SK-N-SH (cell line): ENCODE measurements at regions of chr19 and their contacts with region 1.

Region 1: DNA sequence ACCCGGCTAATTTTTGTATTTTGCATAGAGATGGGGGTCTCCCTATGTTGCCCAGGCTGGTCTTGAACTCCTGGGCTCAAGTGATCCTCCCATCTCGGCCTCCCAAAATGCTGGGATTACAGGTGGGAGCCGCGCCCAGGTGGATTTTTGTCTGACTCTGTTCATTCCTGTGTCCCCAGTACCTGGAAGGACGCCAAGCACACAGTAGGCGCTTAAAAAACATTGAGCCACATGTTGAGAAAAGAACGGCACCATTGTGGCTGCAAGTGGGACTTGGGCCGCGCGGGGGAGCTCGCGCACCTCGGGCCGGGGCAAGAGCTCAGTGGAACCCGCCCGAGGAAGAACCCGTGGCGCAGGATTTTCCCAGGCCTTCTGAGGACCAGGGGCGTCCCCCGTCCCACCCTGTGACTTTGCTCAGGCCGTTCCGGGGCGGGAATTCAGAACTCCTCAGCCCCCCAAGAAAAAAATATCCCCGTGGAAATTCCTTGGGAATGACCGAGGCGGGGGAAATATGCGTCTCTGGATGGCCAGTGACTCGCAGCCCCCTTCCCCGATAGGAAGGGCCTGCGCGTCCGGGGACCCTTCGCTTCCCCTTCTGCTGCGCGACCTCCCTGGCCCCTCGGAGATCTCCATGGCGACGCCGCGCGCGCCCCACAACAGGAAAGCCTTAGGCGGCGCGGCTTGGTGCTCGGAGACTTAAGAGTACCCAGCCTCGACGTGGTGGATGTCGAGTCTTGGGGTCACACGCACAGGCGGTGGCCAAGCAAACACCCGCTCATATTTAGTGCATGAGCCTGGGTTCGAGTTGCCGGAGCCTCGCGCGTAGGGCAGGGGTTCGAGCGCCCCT is 1.4 kb upstream of the ICAM1 start:
- DNase-seq: peak; percentile 91
- H3K4me3 ChIP-seq: peak overlapping the region; percentile 23 to 24; a peak in 3 of 4 replicates
- H3K27ac ChIP-seq: no peak overlapping the region
- H3K4me1 ChIP-seq: peaks cover 0 to 4% of the 10 kb centered on the region in 2 experiments; a peak in 2 of 4 replicates
- H3K27me3 ChIP-seq: no peaks in the 10 kb centered on the region
- CTCF ChIP-seq: peak; percentile 93
- EP300 ChIP-seq: no peak
- RAD21 ChIP-seq: peak; percentile 93

Region 2: DNA sequence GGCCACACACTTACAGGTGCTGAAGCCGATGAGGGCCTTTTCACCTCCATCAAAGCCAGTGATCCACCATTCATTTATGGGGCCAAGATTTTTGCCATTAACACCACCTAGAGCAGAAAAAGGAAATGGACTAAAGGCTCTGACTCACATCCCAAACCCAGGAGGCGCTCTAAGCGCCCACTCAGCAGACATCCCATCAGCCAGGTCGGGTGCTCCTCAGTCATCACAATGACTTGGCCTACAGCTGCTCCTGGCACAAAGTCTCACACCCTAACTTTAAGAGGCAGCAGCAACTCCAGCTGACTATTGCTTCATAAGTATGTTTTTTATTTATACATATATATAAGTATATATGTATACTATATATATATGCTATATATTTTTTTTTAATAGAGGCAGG is 113.7 kb before region 1 on chr19:
- CTCF ChIA-PET with region 1: no interaction called
- POLR2A ChIA-PET with region 1: no interaction called
- DNase-seq: no peak
- H3K4me3 ChIP-seq: no peak overlapping the region
- H3K27ac ChIP-seq: no peak overlapping the region
- H3K4me1 ChIP-seq: no peaks in the 10 kb centered on the region
- H3K27me3 ChIP-seq: no peaks in the 10 kb centered on the region
- CTCF ChIP-seq: no peak
- EP300 ChIP-seq: no peak
- RAD21 ChIP-seq: no peak

Region 3: GRCh38 chr19:10219678-10220077 is 49.9 kb before region 1 on chr19:
- CTCF ChIA-PET with region 1: no interaction called
- POLR2A ChIA-PET with region 1: no interaction called
- DNase-seq: no peak
- H3K4me3 ChIP-seq: no peak overlapping the region
- H3K27ac ChIP-seq: no peak overlapping the region
- H3K4me1 ChIP-seq: no peaks in the 10 kb centered on the region
- H3K27me3 ChIP-seq: no peaks in the 10 kb centered on the region
- CTCF ChIP-seq: no peak; the same call in 1 of the 2 replicates
- EP300 ChIP-seq: no peak
- RAD21 ChIP-seq: no peak

Region 4: DNA sequence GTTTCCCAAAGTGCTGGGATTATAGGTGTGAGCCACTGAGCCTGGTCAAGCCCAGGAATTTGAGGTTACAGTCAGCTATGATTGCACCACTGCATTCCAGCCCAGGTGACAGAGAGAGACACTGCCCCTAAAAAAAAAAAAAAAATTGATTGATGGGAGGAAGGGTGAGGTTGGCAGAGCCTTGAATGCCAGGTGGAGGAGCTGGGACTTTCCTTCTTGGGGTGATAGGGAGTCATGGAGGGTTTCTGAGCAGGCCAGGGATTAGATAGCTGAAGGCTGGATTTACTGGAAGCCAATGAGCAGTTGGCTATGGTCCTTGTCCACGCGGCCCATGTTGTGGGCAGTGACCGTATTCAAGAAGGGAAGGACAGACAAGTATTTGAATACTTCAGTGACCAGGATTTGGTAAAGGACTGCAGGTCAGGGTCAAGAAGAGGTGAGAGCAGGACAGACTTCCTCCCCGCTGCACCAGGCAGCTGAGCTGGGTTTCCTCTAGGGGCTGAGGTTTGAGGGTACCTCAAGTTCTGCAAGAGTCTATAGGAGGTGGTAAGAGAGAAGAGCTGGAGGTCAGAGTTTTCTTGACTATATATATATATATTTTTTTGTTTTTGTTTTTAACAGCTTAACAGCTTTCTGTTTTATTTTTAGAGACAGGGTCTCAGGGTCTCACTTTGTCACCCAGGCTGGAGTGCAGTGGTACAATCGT is 10.3 kb after region 1 on chr19:
- CTCF ChIA-PET with region 1: interaction called, 65 read pairs
- POLR2A ChIA-PET with region 1: no interaction called
- DNase-seq: no peak
- H3K4me3 ChIP-seq: no peak overlapping the region
- H3K27ac ChIP-seq: no peak overlapping the region
- H3K4me1 ChIP-seq: no peaks in the 10 kb centered on the region
- H3K27me3 ChIP-seq: no peaks in the 10 kb centered on the region
- CTCF ChIP-seq: no peak
- EP300 ChIP-seq: no peak
- RAD21 ChIP-seq: no peak

Region 5: GRCh38 chr19:10315335-10316214 is 46.0 kb after region 1 on chr19 and contains the start of gene FDX2:
- CTCF ChIA-PET with region 1: interaction called, 16 read pairs
- POLR2A ChIA-PET with region 1: interaction called, 5 read pairs
- DNase-seq: peak; percentile 97
- H3K4me3 ChIP-seq: peak within 1 kb of the TSS; percentile 73 to 79
- H3K27ac ChIP-seq: peak within 1 kb of the TSS; percentile 37 to 85
- H3K4me1 ChIP-seq: peaks cover 0 to 17% of the 10 kb centered on the region in 2 experiments; a peak in 1 of 4 replicates
- H3K27me3 ChIP-seq: no peaks in the 10 kb centered on the region
- CTCF ChIP-seq: no peak
- EP300 ChIP-seq: no peak
- RAD21 ChIP-seq: no peak
- polyA plus RNA-seq, gene FDX2: 45.8 TPM in 2 replicates

Region 6: DNA sequence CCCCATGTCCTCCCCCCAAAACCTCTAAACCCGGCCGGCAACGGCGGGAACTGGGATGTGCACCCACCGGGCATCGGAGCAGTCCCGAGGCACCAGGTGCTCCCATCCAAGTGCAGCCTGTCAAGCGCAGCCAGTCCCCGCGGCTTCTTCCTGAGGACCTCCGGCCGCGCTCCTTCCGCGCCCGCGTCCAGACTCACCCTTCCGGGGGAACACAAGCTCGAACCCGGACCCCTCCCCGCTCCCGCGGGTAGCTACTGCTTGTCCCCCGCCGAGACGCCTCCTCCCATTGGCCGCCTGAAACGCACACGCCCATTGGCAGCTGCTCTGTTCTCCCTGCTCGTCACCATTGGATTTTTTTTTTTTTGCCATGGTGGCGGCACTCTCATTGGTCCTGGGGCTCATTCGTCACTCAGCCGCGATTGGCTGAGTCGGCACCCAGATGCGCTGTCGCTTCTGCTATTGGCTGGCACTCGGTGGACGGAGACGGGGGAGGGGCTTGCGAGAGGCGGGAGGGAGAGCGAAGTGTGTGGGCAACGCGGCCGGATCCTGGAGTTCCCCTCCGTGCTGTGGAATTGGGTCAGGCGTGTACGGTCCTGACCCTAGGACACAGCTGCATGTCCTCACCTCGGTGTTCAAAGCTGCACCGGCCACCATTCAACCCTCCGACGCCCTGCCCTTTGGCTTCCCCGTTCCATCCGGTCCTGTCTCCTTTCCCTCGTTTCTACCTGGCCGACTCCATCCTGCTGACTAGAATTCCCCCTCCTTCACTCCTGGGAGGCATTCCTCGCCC is 111.0 kb after region 1 on chr19 and contains the start of gene TYK2:
- CTCF ChIA-PET with region 1: interaction called, 596 read pairs
- POLR2A ChIA-PET with region 1: no interaction called
- DNase-seq: peak; percentile 100
- H3K4me3 ChIP-seq: peak within 1 kb of the TSS; percentile 78 to 83
- H3K27ac ChIP-seq: peak within 1 kb of the TSS; percentile 39 to 67; a peak in 3 of 4 replicates
- H3K4me1 ChIP-seq: peaks cover 0 to 9% of the 10 kb centered on the region in 2 experiments; a peak in 1 of 4 replicates
- H3K27me3 ChIP-seq: no peaks in the 10 kb centered on the region
- CTCF ChIP-seq: no peak
- EP300 ChIP-seq: peak in 1 of 2 experiments; percentile 5; a peak in 1 of 4 replicates
- RAD21 ChIP-seq: no peak
- polyA plus RNA-seq, gene TYK2: 34.8 and 44.6 TPM in 2 replicates

Region 7: GRCh38 chr19:10403137-10404021 is 133.8 kb after region 1 on chr19 and contains the start of gene CDC37:
- CTCF ChIA-PET with region 1: interaction called, 32 read pairs
- POLR2A ChIA-PET with region 1: no interaction called
- DNase-seq: peak; percentile 98
- H3K4me3 ChIP-seq: peak within 1 kb of the TSS; percentile 89 to 98
- H3K27ac ChIP-seq: peak within 1 kb of the TSS; percentile 75 to 80
- H3K4me1 ChIP-seq: peaks cover 9 to 15% of the 10 kb centered on the region in 2 experiments; a peak in 3 of 4 replicates
- H3K27me3 ChIP-seq: no peaks in the 10 kb centered on the region
- CTCF ChIP-seq: no peak
- EP300 ChIP-seq: no peak
- RAD21 ChIP-seq: no peak
- polyA plus RNA-seq, gene CDC37: 1,026 and 1,054 TPM in 2 replicates